ENCODE measurements at regions of chr7 and their contacts with region 1.

Region 1: GRCh38 chr7:21767300-21767900 is 178.3 kb downstream of the CDCA7L start:
- DNase-seq: peak in 4 of 5 donors; percentile 15 to 47 (median 32)
- ATAC-seq: peak; percentile 66 to 94 (median 90)
- H3K4me3 ChIP-seq: no peak overlapping the region
- H3K27ac ChIP-seq: no peak overlapping the region
- H3K4me1 ChIP-seq: peaks cover 0 to 17% (median 2%) of the 10 kb centered on the region in 12 donors
- H3K27me3 ChIP-seq: peaks cover 0 to 5% (median 0%) of the 10 kb centered on the region in 9 donors
- CTCF ChIP-seq: peak in 10 of 12 donors; percentile 31 to 62 (median 47)
- POLR2A ChIP-seq: no peak

Region 2: GRCh38 chr7:20980668-20981264 is 786.6 kb before region 1 on chr7:
- intact Hi-C with region 1: no loop called
- DNase-seq: no peak
- ATAC-seq: no peak
- H3K4me3 ChIP-seq: no peak overlapping the region
- H3K27ac ChIP-seq: no peak overlapping the region
- H3K4me1 ChIP-seq: no peaks in the 10 kb centered on the region
- H3K27me3 ChIP-seq: peaks cover 0 to 3% (median 0%) of the 10 kb centered on the region in 9 donors
- CTCF ChIP-seq: no peak
- POLR2A ChIP-seq: no peak

Region 3: DNA sequence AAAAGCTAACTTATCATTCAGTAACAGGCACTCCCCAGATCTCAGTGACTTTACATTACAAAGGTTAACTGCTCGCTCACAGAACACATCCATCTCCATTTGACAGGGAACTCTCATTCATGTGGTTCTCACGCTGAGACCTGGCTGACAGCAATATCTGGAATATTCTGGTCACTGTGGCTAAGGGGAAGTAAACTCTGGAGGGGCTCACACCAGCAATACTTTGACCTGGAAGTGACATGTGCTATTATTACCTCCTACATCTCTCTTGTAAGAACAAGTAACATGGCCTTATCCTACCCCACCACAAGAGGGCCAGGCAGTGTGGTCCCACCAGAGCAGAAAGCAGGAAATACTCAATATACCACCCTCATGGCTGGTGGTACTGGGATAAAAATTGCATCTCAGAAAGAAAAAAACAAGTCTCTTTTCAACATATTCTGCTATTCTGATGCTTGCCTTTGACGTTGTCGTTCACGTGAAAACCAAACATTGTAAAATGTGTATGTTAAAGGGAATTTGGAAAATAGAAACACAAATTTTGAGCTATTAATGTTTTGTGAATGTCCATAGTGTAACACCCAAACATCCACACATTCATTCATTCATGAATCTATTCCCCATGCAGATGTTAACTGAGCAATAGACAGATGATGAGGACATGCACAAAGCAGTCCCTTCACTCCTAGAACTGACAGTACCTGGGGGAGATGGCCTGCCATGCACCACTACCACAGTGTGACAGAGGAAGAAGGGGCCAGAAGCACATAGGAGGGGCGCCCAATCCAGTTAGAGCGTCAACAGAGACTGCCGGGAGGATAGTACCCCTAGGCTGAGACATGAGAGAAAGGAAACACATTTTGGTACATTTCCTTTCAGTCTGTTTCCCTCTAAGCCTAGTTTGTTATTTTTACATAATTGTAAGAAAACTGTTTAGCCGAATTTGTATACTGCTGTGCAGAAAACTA is 505.5 kb before region 1 on chr7:
- intact Hi-C with region 1: loop called in 5 of 10 experiments (anchors 5 to 10 kb)
- DNase-seq: peak in 1 of 5 donors; percentile 17
- ATAC-seq: peak in 2 of 4 donors; percentile 32 to 55
- H3K4me3 ChIP-seq: no peak overlapping the region
- H3K27ac ChIP-seq: no peak overlapping the region
- H3K4me1 ChIP-seq: no peaks in the 10 kb centered on the region
- H3K27me3 ChIP-seq: peaks cover 0 to 29% (median 0%) of the 10 kb centered on the region in 9 donors
- CTCF ChIP-seq: peak in 11 of 12 donors; percentile 19 to 46 (median 29)
- POLR2A ChIP-seq: no peak

Region 4: DNA sequence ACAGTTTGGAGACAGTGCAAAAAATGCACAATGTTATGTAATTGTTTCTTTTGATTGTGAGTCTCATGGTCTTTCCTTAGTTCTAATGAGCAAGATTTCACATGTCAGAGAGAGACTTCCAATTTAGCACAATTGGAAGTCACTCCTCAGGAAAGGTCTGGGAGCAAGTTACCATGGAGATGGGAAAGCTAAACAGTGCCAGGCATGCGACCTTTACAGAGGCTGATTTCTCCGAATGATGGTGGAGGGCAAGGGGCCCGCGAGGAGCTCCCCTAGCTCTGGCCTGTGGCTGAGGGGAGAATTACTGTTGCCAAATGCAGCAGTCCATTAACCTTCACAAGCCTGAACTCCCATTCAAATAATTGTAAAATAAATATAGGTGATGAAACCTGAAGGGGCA is 119.0 kb after region 1 on chr7:
- intact Hi-C with region 1: no loop called
- DNase-seq: no peak
- ATAC-seq: no peak
- H3K4me3 ChIP-seq: no peak overlapping the region
- H3K27ac ChIP-seq: no peak overlapping the region
- H3K4me1 ChIP-seq: peaks cover 0 to 7% (median 0%) of the 10 kb centered on the region in 12 donors
- H3K27me3 ChIP-seq: no peaks in the 10 kb centered on the region
- CTCF ChIP-seq: no peak
- POLR2A ChIP-seq: no peak

Measured in heart left ventricle (tissue), 16 donors.